ENCODE measurements at regions of chr1 and their contacts with region 1.

Region 1: GRCh38 chr1:10338047-10338446 is 60.8 kb upstream of the PGD start:
- DNase-seq: no peak
- H3K4me3 ChIP-seq: no peak overlapping the region
- H3K27ac ChIP-seq: no peak overlapping the region
- H3K4me1 ChIP-seq: no peaks in the 10 kb centered on the region
- H3K27me3 ChIP-seq: no peaks in the 10 kb centered on the region
- CTCF ChIP-seq: peak; percentile 10 to 35 (median 22)
- POLR2A ChIP-seq: no peak

Region 2: DNA sequence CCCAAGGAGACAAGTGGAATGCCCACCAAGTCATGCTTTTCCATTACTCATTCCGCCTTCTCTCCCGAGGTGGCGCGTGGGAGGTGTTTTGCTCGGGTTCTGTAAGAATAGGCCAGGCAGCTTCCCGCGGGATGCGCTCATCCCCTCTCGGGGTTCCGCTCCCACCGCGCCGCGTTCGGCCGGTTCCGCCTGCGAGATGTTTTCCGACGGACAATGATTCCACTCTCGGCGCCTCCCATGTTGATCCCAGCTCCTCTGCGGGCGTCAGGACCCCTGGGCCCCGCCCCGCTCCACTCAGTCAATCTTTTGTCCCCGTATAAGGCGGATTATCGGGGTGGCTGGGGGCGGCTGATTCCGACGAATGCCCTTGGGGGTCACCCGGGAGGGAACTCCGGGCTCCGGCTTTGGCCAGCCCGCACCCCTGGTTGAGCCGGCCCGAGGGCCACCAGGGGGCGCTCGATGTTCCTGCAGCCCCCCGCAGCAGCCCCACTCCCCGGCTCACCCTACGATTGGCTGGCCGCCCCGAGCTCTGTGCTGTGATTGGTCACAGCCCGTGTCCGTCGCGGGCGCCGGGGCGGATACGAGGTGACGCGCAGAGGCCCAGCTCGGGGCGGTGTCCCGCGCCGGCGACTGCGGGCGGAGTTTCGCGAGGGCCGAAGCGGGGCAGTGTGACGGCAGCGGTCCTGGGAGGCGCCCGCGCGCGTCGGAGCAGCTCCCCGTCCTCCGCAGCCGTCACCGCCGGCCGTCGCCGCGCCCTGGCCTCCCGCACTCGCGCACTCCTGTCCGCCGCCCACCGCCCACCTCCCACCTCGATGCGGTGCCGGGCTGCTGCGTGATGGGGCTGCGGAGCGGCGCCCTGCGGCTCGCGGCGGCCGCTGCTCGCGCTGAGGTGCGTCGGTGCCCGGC is 127.9 kb before region 1 on chr1 and contains the start of gene KIF1B:
- intact Hi-C with region 1: loop called (anchors 10 kb)
- DNase-seq: peak in 1 of 2 donors; percentile 97
- H3K4me3 ChIP-seq: peak within 1 kb of the TSS; percentile 87 to 99
- H3K27ac ChIP-seq: peak within 1 kb of the TSS; percentile 99
- H3K4me1 ChIP-seq: peaks cover 42% of the 10 kb centered on the region
- H3K27me3 ChIP-seq: no peaks in the 10 kb centered on the region
- CTCF ChIP-seq: peak; percentile 87 to 98 (median 97)
- POLR2A ChIP-seq: peak; percentile 41 to 98
- total RNA-seq, gene KIF1B: 45.4 TPM

Region 3: DNA sequence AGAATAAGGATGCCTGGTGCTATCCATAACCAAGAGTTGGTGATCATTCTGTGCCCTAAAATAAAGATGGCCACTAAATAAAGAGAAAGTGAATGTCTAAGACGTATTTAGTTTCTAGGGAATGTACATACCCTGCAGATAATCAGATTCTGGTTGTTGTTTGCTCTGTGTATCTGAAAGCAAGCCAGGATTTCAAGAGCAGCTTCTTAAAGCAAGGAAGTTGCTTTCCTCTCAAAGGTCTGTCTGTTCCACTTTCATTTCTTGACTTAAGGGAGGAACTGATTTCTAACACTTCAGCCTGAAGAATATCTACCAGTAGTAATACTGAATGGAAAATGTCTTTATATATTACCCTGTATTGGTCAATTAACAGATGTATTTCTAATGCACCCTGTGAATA is 38.9 kb before region 1 on chr1:
- intact Hi-C with region 1: no loop called
- DNase-seq: no peak
- H3K4me3 ChIP-seq: no peak overlapping the region
- H3K27ac ChIP-seq: no peak overlapping the region
- H3K4me1 ChIP-seq: no peaks in the 10 kb centered on the region
- H3K27me3 ChIP-seq: no peaks in the 10 kb centered on the region
- CTCF ChIP-seq: no peak
- POLR2A ChIP-seq: no peak

Measured in vagina (tissue), 2 donors.